ENCODE measurements at regions of chr16 and their contacts with region 1.

Region 1: DNA sequence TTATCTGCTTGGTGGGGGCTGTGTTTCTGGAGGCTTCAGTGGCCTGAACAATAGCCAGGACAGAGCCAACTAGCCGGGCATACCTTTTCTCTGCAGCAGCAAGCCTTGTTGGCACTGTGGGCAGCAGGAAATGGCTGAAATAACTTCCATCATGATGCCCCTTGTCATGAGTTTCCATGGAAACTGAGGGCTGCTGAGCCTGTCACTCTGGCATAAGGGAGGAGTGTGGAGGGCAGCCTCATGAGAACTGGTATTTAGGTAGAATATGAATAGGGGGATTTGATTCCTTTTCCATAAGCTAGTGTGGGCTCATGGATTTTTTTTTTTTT is 39.4 kb downstream of the PLCG2 start:
- DNase-seq: no peak
- ATAC-seq: no peak
- H3K4me3 ChIP-seq: no peak overlapping the region
- H3K27ac ChIP-seq: no peak overlapping the region
- H3K4me1 ChIP-seq: no peaks in the 10 kb centered on the region
- H3K27me3 ChIP-seq: no peaks in the 10 kb centered on the region
- CTCF ChIP-seq: no peak

Region 2: DNA sequence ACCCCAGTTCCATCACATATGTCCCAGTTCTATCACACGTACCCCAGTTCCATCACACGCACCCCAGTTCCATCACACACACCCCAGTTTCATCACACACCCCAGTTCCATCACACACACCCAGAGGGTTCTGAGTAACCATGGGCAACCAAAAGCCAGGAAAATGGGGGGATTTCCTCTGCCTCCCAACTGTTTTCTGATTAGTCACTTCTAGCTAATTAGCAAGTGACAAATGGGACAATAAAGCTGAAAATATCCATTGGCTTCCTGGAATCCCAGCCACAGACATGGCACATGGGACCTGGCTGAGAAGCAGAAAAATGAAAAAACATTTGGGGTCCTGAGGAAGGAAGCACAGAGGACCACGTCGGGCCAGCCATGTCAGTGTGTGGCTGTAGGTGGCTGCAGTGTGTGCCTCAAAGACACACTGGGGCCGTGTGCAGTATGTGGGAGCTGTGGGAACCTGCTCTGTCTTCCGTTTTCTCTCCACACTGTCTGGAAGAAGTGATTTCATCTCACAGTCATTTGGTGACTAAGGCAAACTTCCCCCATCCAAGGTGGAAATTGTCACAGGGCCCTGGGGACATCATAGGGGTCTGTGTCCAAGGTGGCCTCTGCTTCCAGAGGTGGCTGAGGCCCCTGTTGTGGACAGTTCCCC is 267.3 kb before region 1 on chr16:
- CTCF ChIA-PET with region 1: no interaction called
- POLR2A ChIA-PET with region 1: no interaction called
- in situ Hi-C with region 1: no loop called
- intact Hi-C with region 1: no loop called
- DNase-seq: no peak
- ATAC-seq: peak; percentile 68
- H3K4me3 ChIP-seq: no peak overlapping the region
- H3K27ac ChIP-seq: peak overlapping the region; percentile 52
- H3K4me1 ChIP-seq: peaks cover 29% of the 10 kb centered on the region
- H3K27me3 ChIP-seq: no peaks in the 10 kb centered on the region
- CTCF ChIP-seq: no peak

Region 3: DNA sequence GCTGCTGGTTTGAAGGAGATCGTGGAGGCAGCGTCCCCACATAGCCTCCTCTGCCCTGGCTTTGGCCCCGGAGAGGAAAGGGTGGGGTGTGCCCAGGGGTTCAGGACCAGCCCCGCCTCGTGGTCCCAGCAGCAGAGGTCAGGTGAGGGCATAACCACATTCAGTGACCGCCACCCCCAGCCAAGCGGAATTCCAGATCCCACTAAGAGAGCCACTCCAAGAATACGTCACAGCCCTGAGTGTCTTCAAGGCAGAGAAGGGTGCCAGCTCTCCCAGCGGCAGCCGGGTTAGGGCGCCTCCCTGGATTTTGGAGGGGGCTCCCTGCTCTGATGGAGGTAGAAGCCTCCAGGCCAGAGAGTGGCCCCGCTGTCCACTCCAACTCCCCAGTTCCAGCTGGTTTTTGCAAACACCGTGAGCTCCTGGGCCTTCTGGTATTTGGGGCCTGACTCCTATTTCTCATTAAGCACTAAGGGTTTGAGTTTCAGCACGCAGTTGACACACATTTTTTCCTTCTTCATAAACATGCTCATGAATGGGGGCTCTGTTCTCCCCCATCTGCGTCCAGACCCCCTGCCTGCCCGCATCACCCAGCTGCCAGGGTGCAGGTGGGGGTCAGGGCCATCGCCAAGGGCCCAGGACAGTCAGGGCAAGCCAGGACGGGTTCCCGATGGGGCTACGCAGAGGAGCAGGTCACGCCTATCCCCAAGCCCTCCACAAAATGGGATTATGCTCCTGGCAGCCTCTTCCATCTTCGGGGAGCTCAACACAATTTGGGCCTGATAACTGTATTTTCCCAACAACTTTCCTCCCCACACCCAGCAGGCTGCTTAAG is 137.9 kb before region 1 on chr16:
- CTCF ChIA-PET with region 1: no interaction called
- POLR2A ChIA-PET with region 1: no interaction called
- in situ Hi-C with region 1: no loop called
- intact Hi-C with region 1: no loop called
- DNase-seq: no peak
- ATAC-seq: no peak
- H3K4me3 ChIP-seq: no peak overlapping the region
- H3K27ac ChIP-seq: no peak overlapping the region
- H3K4me1 ChIP-seq: no peaks in the 10 kb centered on the region
- H3K27me3 ChIP-seq: no peaks in the 10 kb centered on the region
- CTCF ChIP-seq: no peak

Region 4: DNA sequence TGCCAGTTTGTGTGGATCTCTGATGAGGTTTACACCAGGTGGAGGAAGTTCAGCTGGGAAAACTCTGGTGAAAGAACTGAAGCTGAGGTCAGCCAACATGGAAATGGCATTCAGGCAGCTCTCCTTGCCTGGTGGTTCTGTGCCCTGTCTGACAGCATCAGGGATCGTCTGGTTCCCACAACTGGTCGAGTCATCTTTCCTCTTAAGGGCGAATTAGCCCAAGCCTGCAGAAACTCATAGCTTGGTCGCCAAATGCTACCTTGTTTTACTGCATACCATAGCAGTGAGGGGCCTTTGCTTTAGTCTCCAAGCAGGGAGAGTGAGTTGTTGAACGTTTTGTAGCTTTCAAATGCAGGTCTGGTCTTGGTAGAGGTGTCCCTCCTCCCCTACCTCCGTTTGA is 32.2 kb before region 1 on chr16:
- CTCF ChIA-PET with region 1: no interaction called
- POLR2A ChIA-PET with region 1: interaction called, 10 read pairs
- in situ Hi-C with region 1: no loop called
- intact Hi-C with region 1: no loop called
- DNase-seq: no peak
- ATAC-seq: no peak
- H3K4me3 ChIP-seq: no peak overlapping the region
- H3K27ac ChIP-seq: no peak overlapping the region
- H3K4me1 ChIP-seq: no peaks in the 10 kb centered on the region; the same call in 1 of the 2 replicates
- H3K27me3 ChIP-seq: no peaks in the 10 kb centered on the region
- CTCF ChIP-seq: no peak

Region 5: DNA sequence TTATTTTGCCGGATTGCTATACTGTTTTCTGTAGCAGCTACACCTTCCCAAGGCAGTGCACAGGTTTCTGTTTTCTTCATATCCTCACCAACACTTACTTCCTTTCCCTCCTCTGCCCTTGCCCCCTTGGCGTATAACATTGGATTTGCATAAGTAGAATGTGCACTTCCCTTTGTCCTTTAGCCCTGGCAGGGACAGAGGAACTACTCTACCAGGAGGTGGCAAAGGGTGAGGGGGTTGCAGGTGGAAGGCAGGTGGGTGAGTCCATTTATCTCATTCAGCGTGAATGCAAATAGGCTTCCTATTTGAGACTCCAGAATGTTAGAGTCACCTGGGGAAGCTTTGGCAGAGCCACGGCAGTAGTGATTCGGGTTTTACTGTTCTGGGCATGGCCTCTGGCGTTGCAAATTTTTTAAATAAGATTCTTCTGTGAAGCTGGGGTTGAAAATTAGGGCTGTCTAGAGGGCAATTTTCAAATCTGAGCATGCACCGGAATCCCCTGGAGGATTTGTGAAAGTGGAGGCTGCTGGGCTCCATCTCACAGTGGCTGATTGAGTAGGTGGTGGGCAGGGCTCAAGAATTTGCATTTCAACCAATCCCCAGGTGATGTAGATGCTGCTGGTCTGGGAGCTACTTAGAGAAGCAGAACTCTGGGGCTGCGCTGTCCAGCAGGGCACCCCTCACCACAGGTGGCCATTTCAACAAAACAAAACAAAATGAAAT is 45.3 kb after region 1 on chr16:
- CTCF ChIA-PET with region 1: no interaction called
- POLR2A ChIA-PET with region 1: no interaction called
- in situ Hi-C with region 1: no loop called
- intact Hi-C with region 1: no loop called
- DNase-seq: no peak
- ATAC-seq: no peak
- H3K4me3 ChIP-seq: no peak overlapping the region
- H3K27ac ChIP-seq: no peak overlapping the region
- H3K4me1 ChIP-seq: no peaks in the 10 kb centered on the region
- H3K27me3 ChIP-seq: no peaks in the 10 kb centered on the region
- CTCF ChIP-seq: no peak

Measured in Panc1 (cell line).